Left colon (tissue), 2 donors: ENCODE measurements at regions of chr1 and their contacts with region 1.

Region 1: GRCh38 chr1:66271216-66271903 is 262.6 kb upstream of the SGIP1 start:
- DNase-seq: peak; percentile 60 to 88
- ATAC-seq: peak; percentile 92

Region 2: GRCh38 chr1:66182551-66183178 is 88.7 kb before region 1 on chr1:
- intact Hi-C with region 1: no loop called
- DNase-seq: peak in 1 of 2 donors; percentile 25
- ATAC-seq: no peak

Region 3: DNA sequence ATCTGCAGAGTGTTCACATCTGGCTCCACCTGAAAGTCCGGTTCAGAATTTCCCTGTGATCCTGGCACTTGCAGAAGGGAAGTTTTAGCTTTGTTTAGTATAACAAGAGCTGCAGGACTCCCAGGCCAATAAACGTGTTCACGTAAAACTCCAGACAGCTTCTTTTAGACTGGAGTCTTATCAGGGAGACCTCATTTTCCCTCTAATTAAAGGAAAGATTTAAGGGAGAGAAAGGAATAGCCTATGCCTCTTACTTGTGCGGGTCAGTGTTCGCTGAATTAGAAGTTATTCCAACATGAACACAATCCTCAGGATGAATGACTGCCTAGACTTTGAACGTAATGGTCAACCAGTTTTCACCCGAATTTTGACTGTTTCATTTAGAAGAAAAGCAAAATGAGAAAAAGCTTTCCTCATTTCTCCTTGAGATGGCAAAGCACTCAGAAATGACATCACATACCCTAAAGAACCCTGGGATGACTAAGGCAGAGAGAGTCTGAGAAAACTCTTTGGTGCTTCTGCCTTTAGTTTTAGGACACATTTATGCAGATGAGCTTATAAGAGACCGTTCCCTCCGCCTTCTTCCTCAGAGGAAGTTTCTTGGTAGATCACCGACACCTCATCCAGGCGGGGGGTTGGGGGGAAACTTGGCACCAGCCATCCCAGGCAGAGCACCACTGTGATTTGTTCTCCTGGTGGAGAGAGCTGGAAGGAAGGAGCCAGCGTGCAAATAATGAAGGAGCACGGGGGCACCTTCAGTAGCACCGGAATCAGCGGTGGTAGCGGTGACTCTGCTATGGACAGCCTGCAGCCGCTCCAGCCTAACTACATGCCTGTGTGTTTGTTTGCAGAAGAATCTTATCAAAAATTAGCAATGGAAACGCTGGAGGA is 60.5 kb after region 1 on chr1:
- intact Hi-C with region 1: loop called in 1 of 2 experiments (anchors 5 kb)
- DNase-seq: peak; percentile 61 to 72
- ATAC-seq: peak; percentile 74